HEK293T (cell line): ENCODE measurements at regions of chr3 and their contacts with region 1.

Region 1: DNA sequence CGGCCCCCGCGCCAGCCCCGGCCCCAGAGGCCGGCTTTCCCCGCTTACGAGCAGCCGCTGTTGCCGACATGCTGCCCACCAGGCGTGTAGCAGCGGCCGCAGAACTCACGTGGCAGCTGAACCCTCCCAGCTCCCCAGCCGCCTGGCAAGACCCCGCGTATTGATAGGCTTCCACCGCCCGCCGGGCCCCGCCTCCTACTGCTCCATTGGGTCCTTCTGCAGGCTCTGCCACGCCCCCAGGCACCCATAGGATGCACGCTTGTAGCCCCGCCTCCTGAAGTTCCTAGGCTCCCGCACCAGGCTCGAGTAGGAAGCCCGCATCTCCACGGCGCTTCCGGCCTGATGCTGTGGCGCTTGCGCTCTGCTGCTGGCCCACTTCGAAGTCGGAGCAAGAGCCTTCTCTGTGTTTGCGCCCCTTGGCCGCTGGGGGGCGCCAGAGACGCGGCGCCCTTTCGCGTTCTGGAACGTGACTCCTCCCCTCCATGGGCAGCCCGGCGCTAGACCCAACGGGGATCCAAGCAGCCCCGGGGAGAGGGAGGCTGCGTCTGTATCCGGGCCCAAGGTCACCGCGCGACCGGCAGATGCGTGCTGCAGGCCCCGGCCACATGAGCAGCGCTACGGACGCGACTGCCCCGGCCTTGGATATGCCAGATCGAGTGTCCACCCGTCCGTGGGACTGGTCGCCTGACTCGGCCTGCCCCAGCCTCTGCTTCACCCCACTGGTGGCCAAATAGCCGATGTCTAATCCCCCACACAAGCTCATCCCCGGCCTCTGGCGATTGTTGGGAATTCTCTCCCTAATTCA is at the starts of genes PARP3 and RRP9:
- DNase-seq: peak; percentile 99

Region 2: GRCh38 chr3:51953445-51953844 is 11.4 kb after region 1 on chr3:
- CTCF ChIA-PET with region 1: interaction called, 17 read pairs
- POLR2A ChIA-PET with region 1: interaction called, 4 read pairs
- DNase-seq: no peak

Region 3: DNA sequence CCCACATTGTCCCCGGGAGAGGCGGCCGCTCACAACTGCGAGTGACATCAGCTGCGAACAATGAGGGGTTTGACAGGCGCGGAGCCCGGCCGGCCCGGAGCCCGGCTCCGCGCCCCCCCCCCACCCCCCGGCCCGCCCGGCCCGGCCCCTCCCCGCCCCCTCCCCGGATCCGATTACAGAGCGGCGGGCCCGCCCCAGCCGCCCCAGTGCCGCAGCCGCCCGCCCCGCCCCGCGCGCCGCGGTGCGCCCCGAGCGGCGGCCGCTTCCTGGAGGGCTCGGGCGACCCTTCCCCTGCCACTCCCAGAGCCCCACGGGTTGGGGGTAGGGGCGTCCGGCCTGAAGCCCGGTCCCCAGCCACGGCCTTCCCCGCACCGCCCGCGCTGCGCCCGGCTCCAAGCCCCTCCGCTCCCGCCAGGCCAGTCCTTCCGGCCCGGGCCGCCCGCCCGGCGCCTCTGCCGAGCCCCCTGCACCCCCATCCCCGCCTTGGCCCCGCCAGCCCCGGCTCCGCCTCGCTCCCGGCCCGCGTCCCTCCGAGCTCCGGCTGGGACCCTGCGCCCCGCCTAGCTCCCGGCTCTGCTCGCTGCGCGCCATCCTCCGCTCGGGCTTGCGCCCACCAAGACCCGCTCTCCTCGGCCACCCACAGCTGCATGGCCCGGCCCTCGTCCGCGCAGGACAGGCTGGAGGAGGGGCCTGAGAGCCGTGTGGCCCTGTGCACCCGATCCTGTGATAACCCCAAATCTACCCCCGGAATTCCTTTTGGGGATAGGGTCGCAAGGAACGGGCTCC is 25.6 kb after region 1 on chr3 and contains the start of gene PCBP4:
- CTCF ChIA-PET with region 1: interaction called, 21 read pairs
- POLR2A ChIA-PET with region 1: interaction called, 52 read pairs
- DNase-seq: peak; percentile 58

Region 4: GRCh38 chr3:51974963-51975851 is 33.2 kb after region 1 on chr3 and contains the start of gene ABHD14A:
- CTCF ChIA-PET with region 1: interaction called, 21 read pairs
- POLR2A ChIA-PET with region 1: interaction called, 52 read pairs
- DNase-seq: peak; percentile 82

Region 5: GRCh38 chr3:51982782-51983577 is 41.0 kb after region 1 on chr3 and contains the start of gene ACY1:
- CTCF ChIA-PET with region 1: interaction called, 10 read pairs
- POLR2A ChIA-PET with region 1: interaction called, 11 read pairs
- DNase-seq: peak; percentile 72